ENCODE measurements at regions of chr1 and their contacts with region 1.

Region 1: GRCh38 chr1:159161001-159161718 is 10.3 kb upstream of the CADM3 start:
- DNase-seq: peak; percentile 67
- CTCF ChIP-seq: peak; percentile 99

Region 2: DNA sequence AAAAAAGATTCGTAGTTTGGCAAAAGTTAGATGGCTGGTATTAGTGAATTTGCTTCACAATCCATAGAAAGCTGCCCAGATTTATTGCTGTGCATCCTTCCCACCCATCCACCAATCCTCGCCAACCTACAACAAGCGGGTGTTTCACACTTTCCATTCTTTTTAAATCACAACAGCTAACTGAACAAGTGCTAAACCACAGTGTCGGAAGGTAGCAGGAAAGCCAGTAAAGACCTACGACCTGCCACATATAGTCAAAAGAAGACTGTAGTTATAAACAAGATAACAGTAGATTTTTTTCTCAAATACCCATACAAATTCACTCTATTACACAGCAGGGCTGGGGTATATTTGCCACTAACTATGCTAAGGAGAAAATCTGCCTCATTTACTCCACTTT is 37.6 kb before region 1 on chr1:
- CTCF ChIA-PET with region 1: no interaction called
- POLR2A ChIA-PET with region 1: no interaction called
- DNase-seq: no peak
- CTCF ChIP-seq: no peak

Region 3: DNA sequence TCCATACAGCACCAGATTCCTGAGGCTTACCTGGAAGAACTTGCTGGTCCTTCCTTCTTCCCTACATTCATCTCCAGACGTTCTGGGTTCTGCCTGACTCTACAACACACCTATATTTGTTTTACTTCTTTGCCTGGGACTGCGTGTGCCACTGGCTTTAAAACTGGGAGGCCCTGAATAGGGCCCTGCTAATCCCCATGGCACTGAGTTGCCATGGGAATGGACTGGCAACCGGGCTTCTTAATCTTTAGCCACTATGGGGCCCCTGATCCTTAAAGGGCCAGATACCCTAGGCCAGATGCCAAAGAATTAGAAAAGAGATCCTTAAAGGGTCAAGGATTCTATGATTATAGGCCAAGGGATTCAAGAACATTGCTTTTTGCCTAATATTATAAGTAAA is 14.2 kb before region 1 on chr1:
- CTCF ChIA-PET with region 1: interaction called, 13 read pairs
- POLR2A ChIA-PET with region 1: no interaction called
- DNase-seq: no peak
- CTCF ChIP-seq: no peak

Region 4: GRCh38 chr1:159204161-159205141 is 43.3 kb after region 1 on chr1 and contains the start of gene ACKR1:
- CTCF ChIA-PET with region 1: interaction called, 145 read pairs
- POLR2A ChIA-PET with region 1: no interaction called
- DNase-seq: no peak
- CTCF ChIP-seq: no peak

Region 5: DNA sequence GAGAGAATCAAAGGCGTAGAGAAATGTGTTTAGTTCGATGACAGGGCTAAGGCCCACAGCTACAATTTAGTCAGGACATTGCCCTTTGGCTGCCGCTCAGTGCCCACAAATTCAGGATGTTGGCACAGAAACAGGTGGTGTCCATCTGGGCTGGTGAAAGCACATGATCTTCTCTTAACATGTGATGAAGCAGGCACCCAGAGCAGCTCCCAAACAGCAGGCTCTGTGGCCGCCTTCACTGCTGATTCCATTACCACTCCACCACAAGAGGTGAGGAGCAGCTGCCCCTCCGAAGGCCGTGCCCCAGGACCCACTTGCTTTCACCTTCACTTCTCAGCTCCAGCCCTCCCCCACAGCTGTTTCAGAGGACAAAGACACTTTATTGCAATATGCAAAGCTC is 68.3 kb after region 1 on chr1:
- CTCF ChIA-PET with region 1: no interaction called
- POLR2A ChIA-PET with region 1: no interaction called
- DNase-seq: no peak
- CTCF ChIP-seq: no peak

Region 6: DNA sequence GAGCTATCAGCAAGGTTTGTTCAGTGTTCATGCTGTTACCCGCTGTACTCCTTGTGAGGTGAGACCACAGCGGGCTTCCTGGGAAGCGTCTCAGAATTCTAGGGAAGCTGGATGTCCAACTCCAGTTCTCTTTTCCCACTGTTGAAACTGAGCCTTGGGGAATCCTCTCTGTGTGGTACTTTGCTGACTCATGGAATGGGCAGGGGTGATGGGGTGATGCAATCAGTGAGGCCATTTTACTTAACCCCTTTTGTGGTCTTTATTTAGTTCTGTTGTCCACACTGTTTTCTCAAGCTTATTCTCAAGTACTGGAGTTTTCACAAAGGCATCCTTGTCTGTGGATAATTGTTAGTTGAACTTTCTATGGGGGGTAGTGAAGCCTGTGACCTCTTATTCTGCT is 86.1 kb after region 1 on chr1:
- CTCF ChIA-PET with region 1: no interaction called
- POLR2A ChIA-PET with region 1: no interaction called
- DNase-seq: no peak
- CTCF ChIP-seq: no peak

Region 7: GRCh38 chr1:159469921-159470533 is 308.9 kb after region 1 on chr1:
- CTCF ChIA-PET with region 1: no interaction called
- POLR2A ChIA-PET with region 1: no interaction called
- DNase-seq: no peak
- CTCF ChIP-seq: no peak

Measured in GM10248 (cell line).